ENCODE measurements at regions of chr20 and their contacts with region 1.

Region 1: DNA sequence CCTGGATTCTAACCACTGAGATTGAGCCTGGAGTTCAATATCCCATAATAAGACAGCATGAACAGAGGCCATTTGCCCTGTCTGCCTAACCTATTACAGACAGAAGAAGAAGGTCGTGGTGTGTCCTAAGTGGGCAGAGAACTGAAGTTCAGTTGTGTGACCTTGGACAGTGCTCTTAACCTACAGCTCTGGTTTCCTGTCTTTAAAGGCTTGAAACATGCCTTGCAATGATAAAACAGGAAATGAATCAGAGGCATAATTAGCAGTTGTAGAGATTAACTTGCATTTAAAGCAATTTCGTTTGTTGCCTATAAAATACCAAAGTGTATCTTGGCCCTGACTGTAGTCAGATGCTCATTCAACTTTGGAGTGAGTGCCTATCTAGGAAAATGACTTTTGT is 507.2 kb upstream of the CHD6 start:
- DNase-seq: no peak
- H3K4me3 ChIP-seq: no peak overlapping the region
- H3K27ac ChIP-seq: no peak overlapping the region
- H3K4me1 ChIP-seq: no peaks in the 10 kb centered on the region
- H3K27me3 ChIP-seq: no peaks in the 10 kb centered on the region
- CTCF ChIP-seq: no peak
- POLR2A ChIP-seq: no peak

Region 2: DNA sequence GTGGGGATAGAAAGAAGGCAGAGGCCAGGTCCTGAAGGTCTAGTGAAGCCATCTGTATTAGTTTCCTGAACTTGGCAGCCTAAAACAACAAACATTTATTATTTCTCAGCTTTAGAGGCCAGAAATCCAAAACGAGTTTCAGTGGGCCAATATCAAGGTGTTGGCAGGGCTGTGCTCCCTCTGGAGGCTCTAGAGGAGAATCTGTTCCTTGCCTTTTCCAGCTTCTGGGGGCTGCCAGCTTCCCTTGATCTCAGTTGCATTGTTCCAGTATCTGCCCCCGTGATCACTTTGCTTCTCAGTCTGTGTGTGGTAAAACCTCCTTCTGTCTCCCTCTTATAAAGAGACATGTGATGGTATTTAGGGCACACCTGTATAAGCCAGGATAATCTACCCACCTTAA is 1518.8 kb before region 1 on chr20:
- intact Hi-C with region 1: loop called (anchors 5 kb)
- DNase-seq: peak in 1 of 2 donors; percentile 16
- H3K4me3 ChIP-seq: no peak overlapping the region
- H3K27ac ChIP-seq: no peak overlapping the region
- H3K4me1 ChIP-seq: no peaks in the 10 kb centered on the region
- H3K27me3 ChIP-seq: no peaks in the 10 kb centered on the region
- CTCF ChIP-seq: no peak
- POLR2A ChIP-seq: no peak

Measured in vagina (tissue), 2 donors.